PC-3 (cell line): ENCODE measurements at regions of chr4 and their contacts with region 1.

Region 1: DNA sequence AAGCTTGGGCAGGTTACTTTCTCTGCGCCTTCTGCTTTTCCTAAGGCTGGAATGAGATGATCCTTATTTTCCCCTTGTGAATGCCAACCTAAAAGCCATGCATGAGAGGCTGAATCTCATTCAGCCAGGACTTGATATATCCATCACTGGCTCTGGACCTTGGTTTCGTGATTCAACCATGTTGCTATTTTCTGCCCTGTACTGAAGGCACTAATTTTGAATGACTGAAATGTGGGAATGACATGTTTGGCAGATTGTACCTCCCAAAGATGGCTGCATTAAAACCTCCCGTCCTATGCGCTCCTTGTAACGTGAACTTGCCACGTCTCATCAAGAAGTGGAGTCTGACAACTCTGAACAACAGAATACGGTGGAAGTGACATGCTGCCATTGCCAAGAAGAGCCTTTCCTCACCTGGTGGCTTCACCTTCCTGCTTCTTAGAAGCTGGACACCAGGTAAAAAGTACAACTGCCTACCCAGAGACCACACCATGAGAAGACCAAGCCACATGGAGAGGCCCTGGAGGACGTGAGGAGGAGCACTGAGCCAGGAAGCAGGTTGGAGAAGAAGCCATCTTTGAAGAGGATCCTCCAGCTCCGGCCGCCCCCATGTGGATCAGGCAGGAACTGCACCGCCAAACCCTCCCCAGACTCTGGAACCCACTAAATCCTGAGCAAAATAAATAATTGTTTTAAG is 174.5 kb downstream of the NSUN7 start:
- DNase-seq: peak; percentile 59
- ATAC-seq: peak; percentile 73; the same call in 1 of the 2 replicates
- H3K4me3 ChIP-seq: no peak overlapping the region
- H3K27ac ChIP-seq: no peak overlapping the region
- H3K4me1 ChIP-seq: no peaks in the 10 kb centered on the region
- H3K27me3 ChIP-seq: no peaks in the 10 kb centered on the region
- CTCF ChIP-seq: peak; percentile 81

Region 2: DNA sequence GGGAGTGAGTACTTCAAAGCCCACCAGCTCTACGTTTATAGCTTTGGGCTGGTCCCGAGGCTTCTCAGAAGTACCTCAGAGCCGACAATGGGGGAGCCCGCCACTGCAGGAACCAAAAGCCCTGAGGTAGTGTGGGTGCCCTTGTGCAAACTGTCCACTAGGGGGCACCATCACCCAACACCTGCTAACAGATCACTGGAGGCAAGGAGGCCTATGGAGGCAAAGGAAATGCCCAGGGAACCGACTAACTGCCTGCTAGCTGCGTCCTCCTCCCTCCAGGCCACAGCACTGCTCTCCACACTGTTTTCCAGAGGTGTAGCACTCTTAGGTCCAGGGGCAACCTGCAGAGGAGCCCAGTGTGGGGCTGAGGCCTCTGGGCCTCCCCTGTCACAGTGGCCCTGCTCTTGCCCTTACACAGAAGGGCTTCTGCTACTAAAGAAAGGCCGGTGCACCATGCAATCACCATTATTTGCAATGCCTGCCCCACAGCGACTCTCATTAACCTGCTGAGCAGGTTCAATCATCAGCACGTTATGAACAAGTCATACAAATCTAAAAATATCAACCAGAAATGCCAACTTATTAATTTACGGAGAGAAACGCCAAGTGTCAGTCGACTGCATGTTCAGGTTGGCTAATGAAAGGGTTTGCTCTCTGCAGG is 15.4 kb before region 1 on chr4:
- CTCF ChIA-PET with region 1: interaction called, 3 read pairs
- POLR2A ChIA-PET with region 1: no interaction called
- intact Hi-C with region 1: loop called (anchors 2 kb)
- DNase-seq: peak; percentile 72
- ATAC-seq: peak; percentile 79
- H3K4me3 ChIP-seq: peak overlapping the region; percentile 35; the same call in 1 of the 2 replicates
- H3K27ac ChIP-seq: peak overlapping the region; percentile 93
- H3K4me1 ChIP-seq: peaks cover 19% of the 10 kb centered on the region
- H3K27me3 ChIP-seq: no peaks in the 10 kb centered on the region
- CTCF ChIP-seq: peak; percentile 90

Region 3: GRCh38 chr4:40976343-40976742 is 52.1 kb after region 1 on chr4:
- CTCF ChIA-PET with region 1: interaction called, 3 read pairs
- POLR2A ChIA-PET with region 1: no interaction called
- intact Hi-C with region 1: loop called (anchors 5 kb)
- DNase-seq: peak; percentile 79
- ATAC-seq: peak; percentile 64
- H3K4me3 ChIP-seq: no peak overlapping the region
- H3K27ac ChIP-seq: no peak overlapping the region
- H3K4me1 ChIP-seq: no peaks in the 10 kb centered on the region
- H3K27me3 ChIP-seq: no peaks in the 10 kb centered on the region
- CTCF ChIP-seq: peak; percentile 67